ENCODE measurements at regions of chr6 and their contacts with region 1.

Region 1: DNA sequence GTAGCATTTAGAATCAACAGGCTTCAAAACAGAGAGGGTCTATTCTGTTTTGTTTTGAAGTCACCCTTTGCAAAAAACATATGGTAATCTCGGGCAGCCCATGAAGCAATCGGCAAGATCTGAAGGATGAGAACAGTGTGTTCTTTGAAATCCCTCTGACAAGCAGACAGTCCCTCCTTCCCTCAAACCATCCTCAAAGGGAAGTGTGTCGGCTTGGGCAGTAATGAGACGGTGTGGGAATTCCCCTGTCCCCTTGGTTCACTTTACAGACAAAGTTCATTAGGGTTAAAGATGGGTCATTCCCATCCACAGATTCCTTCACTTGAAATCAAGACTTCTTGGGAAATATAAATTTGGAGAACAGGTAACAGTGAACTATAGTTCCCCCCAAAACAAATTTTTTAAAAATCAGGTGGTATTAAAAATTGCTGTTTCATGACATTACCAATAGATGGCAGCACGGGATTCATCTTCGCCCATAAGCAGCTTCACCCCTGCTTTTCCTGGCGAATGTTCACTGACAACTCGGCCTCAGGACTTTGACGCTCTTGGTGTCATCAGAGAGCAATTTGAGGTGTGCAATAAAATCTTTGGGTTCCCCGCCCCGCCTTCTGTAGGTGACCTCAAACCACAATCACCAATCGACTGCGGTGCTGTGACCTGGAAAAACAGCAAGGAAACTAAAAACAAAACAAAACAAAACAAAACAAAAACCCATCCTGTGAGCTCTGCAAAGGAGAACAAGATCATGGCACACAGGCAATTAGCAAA is 159.3 kb upstream of the TNFAIP3 start:
- DNase-seq: peak; percentile 89
- H3K4me3 Mint-ChIP-seq: peak overlapping the region; percentile 58
- H3K27ac Mint-ChIP-seq: peak overlapping the region; percentile 86
- H3K4me1 Mint-ChIP-seq: peaks cover 58% of the 10 kb centered on the region
- H3K27me3 Mint-ChIP-seq: no peaks in the 10 kb centered on the region

Region 2: GRCh38 chr6:137661601-137662000 is 46.2 kb before region 1 on chr6:
- CTCF ChIA-PET with region 1: interaction called, 3 read pairs
- intact Hi-C with region 1: loop called (anchors 2 kb)
- DNase-seq: peak; percentile 71
- H3K4me3 Mint-ChIP-seq: no peak overlapping the region
- H3K27ac Mint-ChIP-seq: no peak overlapping the region
- H3K4me1 Mint-ChIP-seq: peaks cover 19% of the 10 kb centered on the region
- H3K27me3 Mint-ChIP-seq: peaks cover 4% of the 10 kb centered on the region

Region 3: GRCh38 chr6:137736048-137736818 is 28.5 kb after region 1 on chr6:
- CTCF ChIA-PET with region 1: no interaction called
- intact Hi-C with region 1: loop called (anchors 1 kb)
- DNase-seq: peak; percentile 25
- H3K4me3 Mint-ChIP-seq: no peak overlapping the region
- H3K27ac Mint-ChIP-seq: no peak overlapping the region
- H3K4me1 Mint-ChIP-seq: peaks cover 18% of the 10 kb centered on the region
- H3K27me3 Mint-ChIP-seq: peaks cover 2% of the 10 kb centered on the region

Region 4: DNA sequence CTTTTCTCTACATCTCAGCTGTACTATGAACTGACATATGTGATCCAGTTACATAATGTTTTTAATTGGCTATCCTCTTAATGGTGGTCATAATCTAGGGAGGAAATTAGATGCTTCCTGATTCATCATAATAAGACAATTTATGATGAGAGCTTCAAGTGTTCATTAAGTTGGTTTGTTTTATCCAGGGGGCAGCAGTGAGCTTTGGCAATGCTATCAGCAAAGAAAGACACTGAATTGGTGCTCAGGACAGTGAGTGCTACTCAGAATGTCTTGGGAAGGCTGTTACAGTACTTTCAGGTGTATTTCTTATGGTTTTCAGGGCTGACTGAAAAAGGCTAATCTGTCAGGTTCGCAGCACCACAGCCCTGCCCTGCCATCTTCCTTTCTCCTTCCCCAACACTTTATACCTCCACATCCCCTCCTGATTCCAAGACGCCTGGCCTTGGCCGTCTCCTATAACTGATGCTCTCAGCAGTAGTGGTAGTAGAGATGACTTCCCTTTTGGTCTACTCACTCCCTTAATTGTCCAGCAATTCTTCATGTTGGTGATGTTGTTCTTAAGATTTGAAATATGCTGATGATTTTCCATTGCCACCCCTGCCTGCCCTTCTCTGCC is 92.3 kb after region 1 on chr6:
- CTCF ChIA-PET with region 1: interaction called, 33 read pairs
- intact Hi-C with region 1: loop called (anchors 1 kb)
- DNase-seq: peak; percentile 86
- H3K4me3 Mint-ChIP-seq: no peak overlapping the region
- H3K27ac Mint-ChIP-seq: peak overlapping the region; percentile 73
- H3K4me1 Mint-ChIP-seq: peaks cover 60% of the 10 kb centered on the region
- H3K27me3 Mint-ChIP-seq: no peaks in the 10 kb centered on the region

Region 5: GRCh38 chr6:137845455-137845854 is 137.7 kb after region 1 on chr6:
- CTCF ChIA-PET with region 1: no interaction called
- intact Hi-C with region 1: loop called (anchors 1 kb)
- DNase-seq: no peak
- H3K4me3 Mint-ChIP-seq: no peak overlapping the region
- H3K27ac Mint-ChIP-seq: no peak overlapping the region
- H3K4me1 Mint-ChIP-seq: peaks cover 13% of the 10 kb centered on the region
- H3K27me3 Mint-ChIP-seq: no peaks in the 10 kb centered on the region

Region 6: GRCh38 chr6:137873273-137873762 is 165.5 kb after region 1 on chr6:
- CTCF ChIA-PET with region 1: interaction called, 35 read pairs
- intact Hi-C with region 1: loop called (anchors 1 kb)
- DNase-seq: peak; percentile 97
- H3K4me3 Mint-ChIP-seq: peak overlapping the region; percentile 89
- H3K27ac Mint-ChIP-seq: peak overlapping the region; percentile 99
- H3K4me1 Mint-ChIP-seq: peaks cover 37% of the 10 kb centered on the region
- H3K27me3 Mint-ChIP-seq: no peaks in the 10 kb centered on the region

Region 7: GRCh38 chr6:137938770-137939379 is 231.1 kb after region 1 on chr6:
- CTCF ChIA-PET with region 1: interaction called, 20 read pairs
- intact Hi-C with region 1: loop called (anchors 1 kb)
- DNase-seq: no peak
- H3K4me3 Mint-ChIP-seq: no peak overlapping the region
- H3K27ac Mint-ChIP-seq: peak overlapping the region; percentile 80
- H3K4me1 Mint-ChIP-seq: peaks cover 43% of the 10 kb centered on the region
- H3K27me3 Mint-ChIP-seq: no peaks in the 10 kb centered on the region